Gastrocnemius medialis (tissue), 4 donors: ENCODE measurements at regions of chr2 and their contacts with region 1.

Region 1: GRCh38 chr2:201071479-201072200 is at the starts of genes HYCC2 and NDUFB3:
- DNase-seq: peak; percentile 89 to 94
- ATAC-seq: peak; percentile 97 to 99
- H3K4me3 ChIP-seq: peak within 1 kb of the TSS; percentile 66 to 97 (median 88)
- H3K27ac ChIP-seq: peak within 1 kb of the TSS; percentile 83 to 96 (median 88)
- H3K4me1 ChIP-seq: peaks cover 49 to 57% of the 10 kb centered on the region in 2 donors
- H3K27me3 ChIP-seq: no peaks in the 10 kb centered on the region
- CTCF ChIP-seq: peak; percentile 10 to 61 (median 30)
- POLR2A ChIP-seq: peak; percentile 61 to 69
- total RNA-seq, gene HYCC2: 2.3 to 12.5 (median 3.5) TPM
- total RNA-seq, gene NDUFB3: 107 to 146 (median 135) TPM

Region 2: GRCh38 chr2:200713003-200713703 is 358.5 kb before region 1 on chr2:
- in situ Hi-C with region 1: loop called in 1 of 4 experiments (anchors 25 kb)
- intact Hi-C with region 1: loop called (anchors 5 kb)
- DNase-seq: peak; percentile 83 to 89
- ATAC-seq: peak; percentile 99 to 100
- H3K4me3 ChIP-seq: peak overlapping the region; percentile 33 to 51 (median 42)
- H3K27ac ChIP-seq: peak overlapping the region; percentile 70 to 82 (median 74)
- H3K4me1 ChIP-seq: peaks cover 0 to 3% of the 10 kb centered on the region in 2 donors
- H3K27me3 ChIP-seq: no peaks in the 10 kb centered on the region
- CTCF ChIP-seq: peak; percentile 73 to 89 (median 86)
- POLR2A ChIP-seq: peak; percentile 66 to 80

Region 3: DNA sequence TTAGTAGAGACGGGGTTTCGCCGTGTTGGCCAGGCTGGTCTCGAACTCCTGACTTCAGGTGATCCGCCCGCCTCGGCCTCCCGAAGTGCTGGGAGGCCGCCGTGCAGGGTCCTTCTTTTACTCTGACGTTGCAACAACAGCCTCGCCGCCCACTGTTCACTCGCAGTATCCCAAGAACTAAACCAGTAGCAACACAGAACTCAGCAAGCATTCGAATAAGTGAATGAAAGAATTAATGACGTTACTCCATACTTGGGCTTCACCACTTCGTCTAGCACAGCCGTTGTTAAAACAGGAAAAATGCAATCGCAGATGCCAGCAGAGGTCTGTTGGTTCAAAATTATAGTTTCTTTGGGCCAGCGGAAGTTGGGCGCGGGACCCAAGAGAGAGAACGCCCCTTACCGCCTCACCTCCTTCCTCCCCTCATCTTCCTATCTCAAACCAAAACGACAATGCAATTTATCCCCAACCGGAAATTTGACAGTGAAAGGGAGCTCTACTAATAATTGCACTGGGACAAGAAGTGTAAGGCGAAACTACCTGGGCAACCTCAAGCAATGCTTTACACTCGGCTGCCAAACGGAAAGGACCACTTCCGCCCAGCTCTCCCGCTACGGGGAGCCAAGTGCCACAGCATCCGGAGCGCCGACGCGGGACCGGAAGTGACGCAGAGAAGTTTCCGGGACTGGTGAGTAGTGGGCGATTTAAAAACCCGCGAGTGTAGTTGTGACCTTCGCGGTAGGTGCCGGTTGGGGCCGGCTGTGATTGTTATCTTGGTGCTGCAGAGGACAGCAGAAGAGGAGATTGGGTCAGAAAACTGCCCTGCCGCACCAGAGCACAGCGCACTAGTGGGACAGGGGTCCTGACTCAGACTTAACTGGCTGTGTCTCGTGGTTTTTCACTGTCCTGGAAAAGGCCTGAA is 182.7 kb before region 1 on chr2 and contains the starts of genes NIF3L1 and PPIL3:
- in situ Hi-C with region 1: no loop called
- intact Hi-C with region 1: loop called (anchors 1 kb)
- DNase-seq: peak; percentile 90 to 93
- ATAC-seq: peak; percentile 95 to 97
- H3K4me3 ChIP-seq: peak within 1 kb of the TSS; percentile 60 to 91 (median 74)
- H3K27ac ChIP-seq: peak within 1 kb of the TSS; percentile 90 to 94 (median 94)
- H3K4me1 ChIP-seq: peaks cover 13 to 22% of the 10 kb centered on the region in 2 donors
- H3K27me3 ChIP-seq: no peaks in the 10 kb centered on the region
- CTCF ChIP-seq: no peak
- POLR2A ChIP-seq: peak; percentile 50 to 57
- total RNA-seq, gene NIF3L1: 17.0 to 28.7 (median 22.4) TPM
- total RNA-seq, gene PPIL3: 8.4 to 29.2 (median 14.3) TPM

Region 4: DNA sequence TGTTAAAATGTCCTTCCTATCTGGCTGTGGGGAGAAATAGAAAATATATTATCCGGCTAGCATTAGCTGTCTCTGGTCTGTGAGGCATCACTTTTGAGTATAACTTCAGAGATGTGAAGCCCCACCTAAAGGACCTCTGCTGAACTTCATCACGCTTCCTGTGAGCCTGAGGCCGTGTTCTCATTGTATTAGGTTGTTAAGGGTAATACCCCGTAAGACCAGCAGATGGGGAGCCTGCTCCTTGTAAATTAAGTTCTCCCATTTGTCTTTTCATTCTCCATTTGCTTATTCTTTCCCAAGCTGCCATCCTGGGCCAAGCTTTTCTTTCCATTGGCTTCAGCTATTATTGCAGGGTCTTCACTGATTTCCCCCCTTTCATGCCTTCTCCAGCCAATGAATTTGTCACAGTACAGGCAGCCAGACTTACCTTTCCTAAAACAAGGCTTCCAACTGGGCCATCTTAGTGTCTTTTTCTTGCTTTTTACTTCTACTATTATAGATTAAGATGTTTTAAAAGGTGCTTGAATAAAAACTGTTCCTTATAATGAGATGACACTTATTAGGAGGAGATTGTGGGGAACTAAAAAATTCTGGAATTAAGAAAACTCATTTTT is 170.1 kb before region 1 on chr2:
- in situ Hi-C with region 1: loop called in 2 of 4 experiments (anchors 10 kb)
- intact Hi-C with region 1: loop called (anchors 1 kb)
- DNase-seq: peak; percentile 5 to 52
- ATAC-seq: peak; percentile 67 to 82
- H3K4me3 ChIP-seq: no peak overlapping the region
- H3K27ac ChIP-seq: no peak overlapping the region
- H3K4me1 ChIP-seq: peaks cover 0 to 10% of the 10 kb centered on the region in 2 donors
- H3K27me3 ChIP-seq: no peaks in the 10 kb centered on the region
- CTCF ChIP-seq: peak; percentile 43 to 69 (median 64)
- POLR2A ChIP-seq: no peak

Region 5: DNA sequence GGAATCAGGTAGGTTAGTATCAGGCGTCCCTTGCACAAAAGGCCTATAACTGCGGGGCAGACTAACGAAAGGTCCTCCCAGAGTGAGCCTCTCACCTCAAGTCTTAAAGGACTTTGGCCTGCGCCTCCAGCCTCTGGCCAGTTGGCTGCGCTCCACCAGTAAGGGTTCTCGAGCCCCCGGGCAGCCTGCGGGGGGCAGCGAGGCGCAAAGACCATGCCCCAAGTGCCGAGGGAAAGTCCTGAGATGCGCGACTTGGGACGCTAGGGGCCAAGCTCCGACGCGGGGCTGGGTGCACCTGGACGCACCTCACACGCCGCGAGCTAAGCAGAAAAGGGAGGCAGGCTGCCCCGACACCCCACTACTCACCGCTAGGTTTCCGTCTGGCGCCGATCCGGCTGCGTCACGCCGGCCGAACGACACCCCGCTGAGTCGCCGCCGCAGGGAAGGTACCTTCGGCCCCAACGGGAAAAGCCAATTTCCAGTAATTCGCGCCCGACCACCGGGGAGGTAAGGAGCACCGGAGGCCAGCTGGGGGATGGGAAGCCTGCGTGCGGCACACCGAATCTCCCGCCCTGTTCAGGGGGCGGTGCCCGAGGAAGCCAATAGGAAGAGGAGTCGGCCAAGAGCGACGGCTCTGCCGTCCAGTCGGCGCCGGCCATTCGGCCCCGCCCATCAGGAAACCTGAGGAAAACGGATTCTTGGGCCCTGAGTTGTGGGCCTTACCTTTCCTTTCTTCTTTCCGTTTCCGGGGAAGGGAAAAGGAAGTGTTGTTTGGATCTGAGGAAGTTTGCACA is 108.3 kb before region 1 on chr2 and contains the start of gene ORC2:
- in situ Hi-C with region 1: loop called in 3 of 4 experiments (anchors 5 to 25 kb)
- intact Hi-C with region 1: loop called (anchors 1 kb)
- DNase-seq: peak; percentile 91 to 95
- ATAC-seq: peak; percentile 97
- H3K4me3 ChIP-seq: peak within 1 kb of the TSS; percentile 83 to 93 (median 88)
- H3K27ac ChIP-seq: peak within 1 kb of the TSS; percentile 82 to 93 (median 84)
- H3K4me1 ChIP-seq: peaks cover 24 to 26% of the 10 kb centered on the region in 2 donors
- H3K27me3 ChIP-seq: no peaks in the 10 kb centered on the region
- CTCF ChIP-seq: peak; percentile 60 to 80 (median 68)
- POLR2A ChIP-seq: no peak
- total RNA-seq, gene ORC2: 4.7 to 16.1 (median 6.8) TPM

Region 6: GRCh38 chr2:201118121-201118960 is 46.7 kb after region 1 on chr2:
- in situ Hi-C with region 1: no loop called
- intact Hi-C with region 1: loop called (anchors 1 kb)
- DNase-seq: peak; percentile 95 to 98
- ATAC-seq: peak; percentile 53
- H3K4me3 ChIP-seq: peak overlapping the region; percentile 70 to 95 (median 82)
- H3K27ac ChIP-seq: peak overlapping the region; percentile 95 to 100 (median 98)
- H3K4me1 ChIP-seq: peaks cover 30 to 33% of the 10 kb centered on the region in 2 donors
- H3K27me3 ChIP-seq: no peaks in the 10 kb centered on the region
- CTCF ChIP-seq: peak in 3 of 5 experiments; percentile 35 to 49 (median 37)
- POLR2A ChIP-seq: peak; percentile 68 to 87

Region 7: DNA sequence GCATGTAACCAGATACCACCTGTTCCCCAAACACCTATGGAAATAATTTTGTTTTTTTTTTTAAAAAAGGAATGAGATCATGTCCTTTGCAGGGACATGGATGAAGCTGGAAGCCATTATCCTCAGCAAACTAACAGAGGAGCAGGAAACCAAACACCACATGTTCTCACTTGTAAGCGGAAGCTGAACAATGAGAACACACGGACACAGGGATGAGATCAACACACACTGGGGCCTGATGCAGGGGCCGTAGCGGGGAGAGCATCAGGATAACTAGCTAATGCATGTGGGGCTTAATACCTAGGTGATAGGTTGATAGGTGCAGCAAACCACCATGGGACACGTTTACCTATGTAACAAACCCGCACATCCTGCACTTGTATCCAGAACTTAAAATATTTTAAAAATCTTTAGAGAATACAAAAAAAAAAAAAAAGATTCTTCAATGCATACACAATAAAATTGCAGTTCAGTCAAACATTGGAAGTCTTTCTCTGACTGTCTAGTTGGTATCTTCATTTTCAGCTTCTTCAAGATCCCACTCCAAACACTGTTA is 99.7 kb after region 1 on chr2:
- in situ Hi-C with region 1: no loop called
- intact Hi-C with region 1: loop called (anchors 2 kb)
- DNase-seq: no peak
- ATAC-seq: no peak
- H3K4me3 ChIP-seq: no peak overlapping the region
- H3K27ac ChIP-seq: peak overlapping the region in 1 of 4 donors; percentile 23
- H3K4me1 ChIP-seq: no peaks in the 10 kb centered on the region
- H3K27me3 ChIP-seq: no peaks in the 10 kb centered on the region
- CTCF ChIP-seq: no peak
- POLR2A ChIP-seq: no peak